ENCODE measurements at regions of chr2 and their contacts with region 1.

Region 1: GRCh38 chr2:120252225-120253021 is at the start of gene RALB:
- DNase-seq: peak; percentile 99
- H3K4me3 Mint-ChIP-seq: peak within 1 kb of the TSS; percentile 98
- H3K27ac Mint-ChIP-seq: peak within 1 kb of the TSS; percentile 95
- H3K4me1 Mint-ChIP-seq: peaks cover 85% of the 10 kb centered on the region
- H3K27me3 Mint-ChIP-seq: peaks cover 10% of the 10 kb centered on the region
- total RNA-seq, gene RALB: 79.7 and 84.2 TPM in 2 replicates

Region 2: DNA sequence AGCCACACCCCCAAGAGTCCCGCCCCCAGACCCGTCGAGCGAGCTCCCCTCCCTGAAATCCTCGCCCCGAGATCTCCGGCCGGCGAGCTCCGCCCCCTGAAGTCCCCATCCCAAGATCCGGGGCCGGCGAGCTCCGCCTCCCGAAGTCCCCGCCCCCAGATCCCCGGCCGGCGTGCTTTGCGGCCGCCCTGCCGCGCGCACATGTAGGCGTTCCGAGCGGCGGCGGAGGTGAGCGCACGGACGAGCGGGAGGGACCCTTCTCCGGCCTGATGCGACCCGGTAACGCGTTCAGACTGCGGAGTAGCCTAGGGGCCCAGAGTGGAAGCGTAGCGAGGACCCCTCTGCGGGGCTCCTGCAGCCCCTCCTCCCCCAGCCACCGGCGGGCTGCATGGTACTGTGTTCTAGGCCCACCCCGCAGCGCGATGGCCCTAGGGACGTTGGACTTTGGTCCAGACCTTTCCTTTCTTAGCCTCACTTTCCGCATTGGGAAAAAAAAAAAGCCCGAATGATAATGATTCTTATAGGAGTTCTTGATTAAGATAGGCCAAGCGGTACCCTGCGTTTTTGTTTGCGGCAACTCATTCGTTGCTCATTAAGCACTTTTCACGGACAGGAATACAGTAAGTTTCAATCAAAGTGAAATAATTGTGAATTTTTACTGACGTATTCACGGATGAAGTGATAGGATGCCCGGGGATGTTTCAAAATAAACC is 573.3 kb before region 1 on chr2 and contains the start of gene TMEM177:
- intact Hi-C with region 1: loop called (anchors 1 kb)
- DNase-seq: peak; percentile 90
- H3K4me3 Mint-ChIP-seq: peak within 1 kb of the TSS; percentile 96
- H3K27ac Mint-ChIP-seq: peak within 1 kb of the TSS; percentile 85
- H3K4me1 Mint-ChIP-seq: peaks cover 25% of the 10 kb centered on the region
- H3K27me3 Mint-ChIP-seq: peaks cover 4% of the 10 kb centered on the region
- total RNA-seq, gene TMEM177: 16.6 and 17.4 TPM in 2 replicates

Region 3: DNA sequence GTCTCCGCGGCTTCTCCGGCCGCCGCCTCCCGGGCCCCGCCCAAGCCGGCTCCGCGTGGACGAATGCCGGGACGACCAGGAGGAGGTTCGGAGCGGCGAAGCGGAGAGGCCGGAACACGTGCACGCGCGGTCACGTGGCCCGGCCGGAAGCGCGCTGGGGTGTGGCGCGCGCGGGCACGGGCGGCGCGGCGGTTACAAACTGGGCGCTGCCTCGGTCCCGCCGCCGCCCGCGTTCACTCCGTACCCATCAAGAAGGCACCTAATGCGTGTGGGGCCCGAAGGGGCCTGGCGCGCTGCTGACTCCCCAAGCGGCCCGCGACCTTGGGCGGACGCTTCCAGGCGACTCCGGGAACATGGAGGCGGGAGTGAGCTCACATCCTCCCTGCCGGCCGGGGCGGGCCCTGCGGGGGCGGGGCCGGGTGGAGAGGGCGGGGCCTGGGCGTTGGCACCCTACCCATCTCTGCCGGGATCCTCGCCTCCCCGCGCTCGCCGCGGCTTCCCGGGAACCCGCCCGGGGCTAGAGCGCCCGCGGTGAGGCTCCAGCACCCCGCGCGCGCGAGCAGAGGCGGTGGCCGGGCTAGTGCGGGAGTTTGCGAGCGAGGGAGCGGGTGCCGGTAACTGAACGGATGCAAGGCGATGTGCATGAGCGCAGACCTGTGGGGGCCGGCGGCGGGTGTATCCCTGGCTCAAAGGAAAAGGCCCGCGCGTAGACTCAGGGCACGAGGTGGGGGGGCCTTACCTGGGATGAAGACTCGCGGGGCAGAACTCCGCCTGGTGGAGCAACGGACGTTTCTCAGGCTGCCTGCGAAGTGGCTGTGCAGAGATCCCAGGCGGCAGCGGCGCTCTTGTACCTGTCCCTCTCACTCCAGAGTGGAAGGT is 29.1 kb before region 1 on chr2 and contains the start of gene TMEM185B:
- intact Hi-C with region 1: loop called (anchors 1 kb)
- DNase-seq: peak; percentile 90
- H3K4me3 Mint-ChIP-seq: peak within 1 kb of the TSS; percentile 86
- H3K27ac Mint-ChIP-seq: peak within 1 kb of the TSS; percentile 92
- H3K4me1 Mint-ChIP-seq: peaks cover 69% of the 10 kb centered on the region
- H3K27me3 Mint-ChIP-seq: peaks cover 2% of the 10 kb centered on the region
- total RNA-seq, gene TMEM185B: 47.9 and 48.6 TPM in 2 replicates

Region 4: GRCh38 chr2:120231974-120232635 is 20.3 kb before region 1 on chr2:
- intact Hi-C with region 1: loop called (anchors 1 kb)
- DNase-seq: peak; percentile 81
- H3K4me3 Mint-ChIP-seq: peak overlapping the region; percentile 91
- H3K27ac Mint-ChIP-seq: peak overlapping the region; percentile 98
- H3K4me1 Mint-ChIP-seq: peaks cover 59% of the 10 kb centered on the region
- H3K27me3 Mint-ChIP-seq: no peaks in the 10 kb centered on the region

Region 5: GRCh38 chr2:120267348-120267747 is 14.9 kb after region 1 on chr2:
- intact Hi-C with region 1: loop called (anchors 2 kb)
- DNase-seq: no peak
- H3K4me3 Mint-ChIP-seq: no peak overlapping the region
- H3K27ac Mint-ChIP-seq: peak overlapping the region; percentile 86
- H3K4me1 Mint-ChIP-seq: peaks cover 54% of the 10 kb centered on the region
- H3K27me3 Mint-ChIP-seq: no peaks in the 10 kb centered on the region

Region 6: GRCh38 chr2:120287183-120288015 is 35.0 kb after region 1 on chr2:
- intact Hi-C with region 1: loop called (anchors 1 kb)
- DNase-seq: no peak
- H3K4me3 Mint-ChIP-seq: peak overlapping the region; percentile 30
- H3K27ac Mint-ChIP-seq: peak overlapping the region; percentile 90
- H3K4me1 Mint-ChIP-seq: peaks cover 76% of the 10 kb centered on the region
- H3K27me3 Mint-ChIP-seq: no peaks in the 10 kb centered on the region

Region 7: GRCh38 chr2:120559401-120559800 is 307.0 kb after region 1 on chr2:
- intact Hi-C with region 1: no loop called
- DNase-seq: no peak
- H3K4me3 Mint-ChIP-seq: no peak overlapping the region
- H3K27ac Mint-ChIP-seq: no peak overlapping the region
- H3K4me1 Mint-ChIP-seq: no peaks in the 10 kb centered on the region
- H3K27me3 Mint-ChIP-seq: peaks cover 5% of the 10 kb centered on the region

Measured in activated T-helper 1 cell treated with anti-CD3 and anti-CD28 coated beads, Interleukin-12 subunit alpha, Interleukin-12 subunit beta, Interleukin-2, Interleukin-4 antibody, amounts not matched to agents 30 ng/mL and 10 ng/mL and 1 ng/mL, durations not matched to agents 14 hours and 24 hours and 36 hours (primary cell).